ENCODE measurements at regions of chr20 and their contacts with region 1.

Region 1: DNA sequence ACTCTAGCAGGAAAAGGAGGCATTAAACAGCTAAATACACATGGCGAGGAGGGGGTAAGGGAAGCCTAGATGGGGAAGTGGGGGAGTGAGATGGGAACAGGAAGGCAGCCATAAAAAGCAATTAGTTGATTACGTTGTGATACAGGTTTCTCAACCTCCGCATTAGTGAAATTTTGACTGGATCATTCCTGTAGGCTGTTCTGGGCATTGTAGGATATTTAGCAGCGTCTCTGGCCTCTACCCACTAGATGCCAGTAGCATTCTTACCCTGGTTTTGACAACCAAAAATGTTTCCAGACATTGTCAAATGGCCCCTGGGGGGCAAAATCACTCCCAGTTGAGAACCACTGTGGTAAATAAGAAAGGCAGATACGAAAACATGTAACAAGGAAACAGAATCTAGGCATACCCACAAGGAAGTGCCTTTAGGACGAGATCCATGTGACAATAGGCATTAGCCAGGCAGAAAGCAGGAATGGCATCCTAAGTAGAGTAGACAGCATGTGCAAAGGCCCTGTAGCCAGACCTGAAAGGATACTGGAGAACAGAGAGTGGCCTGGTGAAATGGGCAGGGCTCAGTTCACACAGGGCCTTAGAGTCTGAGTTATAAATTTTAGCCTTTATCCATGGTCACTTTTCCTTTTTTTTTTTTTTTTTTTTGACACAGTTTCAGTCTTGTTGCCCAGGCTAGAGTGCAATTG is 25.8 kb upstream of the PTPN1 start:
- DNase-seq: no peak
- H3K4me3 ChIP-seq: no peak overlapping the region
- H3K27ac ChIP-seq: no peak overlapping the region
- H3K4me1 ChIP-seq: no peaks in the 10 kb centered on the region
- H3K27me3 ChIP-seq: no peaks in the 10 kb centered on the region
- CTCF ChIP-seq: no peak
- EP300 ChIP-seq: no peak
- POLR2A ChIP-seq: no peak
- RAD21 ChIP-seq: no peak

Region 2: GRCh38 chr20:50348096-50348495 is 136.3 kb before region 1 on chr20:
- CTCF ChIA-PET with region 1: no interaction called
- POLR2A ChIA-PET with region 1: no interaction called
- DNase-seq: no peak
- H3K4me3 ChIP-seq: no peak overlapping the region
- H3K27ac ChIP-seq: no peak overlapping the region
- H3K4me1 ChIP-seq: 0 out of 7 replicates have a peak, but pooled peaks cover 0 to 3% (median 0%) of the 10 kb centered on the region in 4 experiments
- H3K27me3 ChIP-seq: no peaks in the 10 kb centered on the region
- CTCF ChIP-seq: no peak
- EP300 ChIP-seq: no peak
- POLR2A ChIP-seq: no peak
- RAD21 ChIP-seq: no peak

Region 3: DNA sequence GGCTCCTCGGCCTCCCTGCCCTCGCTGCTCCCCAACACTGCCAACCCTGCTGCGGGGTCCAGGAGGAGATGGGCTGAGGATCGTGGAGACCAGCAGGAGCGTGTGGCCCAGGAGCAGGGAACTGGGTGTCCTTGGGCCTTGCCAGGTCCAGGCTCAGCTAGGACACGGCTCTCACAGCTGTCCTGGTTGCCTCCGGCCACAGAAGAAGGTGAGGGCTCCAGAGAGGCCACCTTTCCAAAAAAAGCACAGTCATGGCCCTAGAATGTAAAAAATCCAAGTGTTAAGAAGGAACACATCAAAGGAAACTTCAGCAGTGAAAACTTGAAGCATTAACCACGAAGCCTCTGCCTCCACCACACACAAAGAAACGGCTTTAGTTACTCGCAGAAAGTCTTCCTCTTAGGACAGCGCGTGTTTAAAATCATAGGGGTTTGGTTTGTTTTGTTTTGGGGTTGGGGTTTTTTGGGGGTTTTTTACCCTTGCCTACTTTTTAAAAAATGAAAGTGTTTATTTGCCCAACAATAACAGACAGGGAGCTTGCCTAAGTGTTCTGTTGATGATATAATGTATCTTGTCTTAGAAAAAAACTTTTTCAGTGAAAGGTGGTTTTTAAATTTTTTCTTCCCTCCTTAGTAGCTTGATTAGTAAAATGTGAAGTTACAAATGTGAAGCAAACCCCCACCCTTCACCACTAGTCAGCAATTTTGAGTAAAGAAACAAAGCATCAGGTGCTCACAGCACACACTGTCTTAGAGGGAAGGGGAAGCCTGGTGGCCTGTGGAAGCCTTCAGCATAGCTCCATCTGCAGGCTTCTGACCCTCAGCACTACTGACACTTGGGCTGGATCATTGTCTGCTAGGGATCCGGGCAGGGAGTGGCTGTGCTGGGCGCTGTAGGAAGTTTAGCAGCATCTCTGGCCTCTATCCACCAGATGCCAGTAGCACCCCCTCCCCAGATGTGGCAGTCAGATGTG is 85.7 kb after region 1 on chr20:
- CTCF ChIA-PET with region 1: interaction called, 36 read pairs
- POLR2A ChIA-PET with region 1: no interaction called
- DNase-seq: no peak
- H3K4me3 ChIP-seq: no peak overlapping the region
- H3K27ac ChIP-seq: no peak overlapping the region
- H3K4me1 ChIP-seq: no peaks in the 10 kb centered on the region
- H3K27me3 ChIP-seq: no peaks in the 10 kb centered on the region
- CTCF ChIP-seq: peak; percentile 51 to 71 (median 67)
- EP300 ChIP-seq: no peak
- POLR2A ChIP-seq: no peak
- RAD21 ChIP-seq: peak; percentile 57 to 67

Region 4: GRCh38 chr20:50588034-50588611 is 103.7 kb after region 1 on chr20:
- CTCF ChIA-PET with region 1: interaction called, 11 read pairs
- POLR2A ChIA-PET with region 1: interaction called, 3 read pairs
- DNase-seq: peak in 1 of 2 experiments; percentile 99
- H3K4me3 ChIP-seq: no peak overlapping the region
- H3K27ac ChIP-seq: no peak overlapping the region
- H3K4me1 ChIP-seq: no peaks in the 10 kb centered on the region
- H3K27me3 ChIP-seq: no peaks in the 10 kb centered on the region
- CTCF ChIP-seq: peak; percentile 99
- EP300 ChIP-seq: no peak
- POLR2A ChIP-seq: no peak
- RAD21 ChIP-seq: peak; percentile 64 to 75

Measured in H1 (cell line).